ENCODE measurements at regions of chr5 and their contacts with region 1.

Region 1: DNA sequence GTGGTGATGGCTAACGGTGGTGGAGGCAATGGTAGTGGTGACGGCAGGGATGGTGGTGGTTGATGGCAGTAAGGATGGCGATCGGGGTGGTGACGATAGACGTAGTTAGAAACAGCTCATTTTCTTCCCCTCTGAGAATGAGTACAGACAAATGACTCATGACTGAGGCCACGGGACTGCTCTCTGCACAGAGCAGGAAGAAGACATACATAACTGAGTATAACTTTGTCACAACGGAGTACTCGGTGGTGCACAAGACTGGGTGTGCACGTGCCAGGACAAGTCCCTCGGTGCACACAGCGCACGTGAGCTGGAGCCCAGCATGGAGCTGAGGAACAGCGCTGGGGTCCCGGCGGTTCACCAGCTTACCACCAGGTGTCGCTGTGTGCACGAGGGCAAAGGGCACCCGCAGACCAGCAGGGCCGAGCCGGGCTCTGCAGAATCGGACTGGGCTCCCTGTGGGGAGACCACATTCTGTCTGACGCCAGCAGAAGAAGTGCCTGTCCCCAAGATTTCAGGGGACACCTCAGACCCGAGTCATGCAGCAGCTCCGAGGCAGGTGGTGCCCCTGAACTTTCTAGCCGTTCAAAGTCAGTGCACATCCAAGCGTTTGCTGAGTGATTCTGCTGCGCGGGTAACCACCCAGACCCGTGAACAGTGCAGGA is 188.6 kb downstream of the FSTL4 start:
- DNase-seq: peak; percentile 81
- CTCF ChIP-seq: peak; percentile 88

Region 2: DNA sequence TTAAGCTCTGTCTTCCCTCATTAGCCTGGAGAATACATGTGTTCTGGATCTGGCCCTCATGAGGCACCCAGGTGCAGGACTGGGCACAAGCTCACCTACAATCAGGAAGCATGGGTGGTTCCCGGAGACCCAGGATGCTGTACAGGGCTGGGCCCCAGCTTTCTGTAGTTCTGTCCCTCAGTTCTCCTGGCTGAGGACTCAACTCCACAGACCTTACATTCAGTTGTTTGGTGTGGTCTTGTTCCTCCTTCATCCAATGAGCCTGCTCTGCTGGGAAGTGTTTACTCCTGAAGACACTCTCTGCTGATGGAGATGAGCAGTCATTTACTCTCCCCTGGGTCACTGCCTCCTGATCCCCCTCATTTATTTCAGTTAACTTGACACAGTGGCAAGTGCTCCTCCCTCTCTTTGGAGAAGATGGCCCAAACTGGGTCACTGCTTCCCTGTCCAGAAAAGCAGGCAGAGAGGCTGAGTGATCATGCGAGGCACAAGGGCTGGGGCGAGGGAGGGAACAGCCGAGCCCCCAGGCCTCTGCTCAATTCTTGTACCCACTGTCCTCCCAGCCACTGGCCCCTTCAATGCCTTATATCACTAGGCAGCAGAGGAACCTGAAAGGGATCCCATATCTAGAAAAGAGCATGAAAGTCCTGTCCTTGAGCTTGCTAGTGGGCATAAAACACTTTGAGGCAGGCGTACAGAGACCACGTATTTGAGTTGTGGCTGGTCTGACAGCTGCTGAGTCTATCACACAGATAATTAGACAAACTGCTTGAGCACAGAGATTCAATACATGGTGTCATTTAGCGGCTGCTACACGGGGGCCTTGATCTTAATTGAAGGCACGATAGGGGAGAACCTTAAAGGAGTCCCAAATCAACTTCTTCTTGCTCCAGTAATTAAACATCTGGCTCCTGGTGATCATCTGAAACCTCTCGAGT is 33.1 kb before region 1 on chr5:
- CTCF ChIA-PET with region 1: interaction called, 28 read pairs
- POLR2A ChIA-PET with region 1: no interaction called
- DNase-seq: no peak
- CTCF ChIP-seq: no peak

Region 3: GRCh38 chr5:133406977-133407678 is 16.6 kb before region 1 on chr5:
- CTCF ChIA-PET with region 1: interaction called, 51 read pairs
- POLR2A ChIA-PET with region 1: no interaction called
- DNase-seq: no peak
- CTCF ChIP-seq: no peak

Region 4: DNA sequence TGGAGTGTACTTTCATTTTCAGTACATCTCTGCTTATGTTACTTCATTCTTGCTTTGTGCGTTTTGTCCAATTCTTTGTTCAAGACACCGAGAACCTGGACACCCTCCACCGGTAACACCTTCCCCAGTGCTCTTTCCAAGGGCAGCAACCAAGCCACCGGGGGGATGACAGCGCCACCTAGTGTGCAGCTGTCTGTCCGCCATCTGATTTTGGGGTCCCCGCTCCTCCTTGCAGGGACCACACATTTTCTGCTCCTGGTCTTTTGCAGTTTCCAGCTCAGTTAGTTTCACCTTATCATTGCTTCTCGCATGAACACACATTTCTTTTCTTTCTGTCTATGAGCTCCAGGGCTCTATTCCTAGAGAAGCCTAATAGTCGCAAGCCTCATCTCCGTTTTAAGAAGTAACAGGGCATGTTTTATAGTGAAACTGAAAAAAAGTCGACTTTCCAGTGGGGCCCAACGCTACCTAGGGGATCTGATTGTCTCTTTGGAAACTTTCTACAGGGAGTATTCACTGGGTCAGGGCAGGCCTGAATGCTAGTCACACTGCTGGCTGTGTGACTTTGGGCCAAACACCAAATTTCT is 36.5 kb after region 1 on chr5:
- CTCF ChIA-PET with region 1: interaction called, 11 read pairs
- POLR2A ChIA-PET with region 1: no interaction called
- DNase-seq: peak; percentile 61
- CTCF ChIP-seq: peak; percentile 60

Region 5: DNA sequence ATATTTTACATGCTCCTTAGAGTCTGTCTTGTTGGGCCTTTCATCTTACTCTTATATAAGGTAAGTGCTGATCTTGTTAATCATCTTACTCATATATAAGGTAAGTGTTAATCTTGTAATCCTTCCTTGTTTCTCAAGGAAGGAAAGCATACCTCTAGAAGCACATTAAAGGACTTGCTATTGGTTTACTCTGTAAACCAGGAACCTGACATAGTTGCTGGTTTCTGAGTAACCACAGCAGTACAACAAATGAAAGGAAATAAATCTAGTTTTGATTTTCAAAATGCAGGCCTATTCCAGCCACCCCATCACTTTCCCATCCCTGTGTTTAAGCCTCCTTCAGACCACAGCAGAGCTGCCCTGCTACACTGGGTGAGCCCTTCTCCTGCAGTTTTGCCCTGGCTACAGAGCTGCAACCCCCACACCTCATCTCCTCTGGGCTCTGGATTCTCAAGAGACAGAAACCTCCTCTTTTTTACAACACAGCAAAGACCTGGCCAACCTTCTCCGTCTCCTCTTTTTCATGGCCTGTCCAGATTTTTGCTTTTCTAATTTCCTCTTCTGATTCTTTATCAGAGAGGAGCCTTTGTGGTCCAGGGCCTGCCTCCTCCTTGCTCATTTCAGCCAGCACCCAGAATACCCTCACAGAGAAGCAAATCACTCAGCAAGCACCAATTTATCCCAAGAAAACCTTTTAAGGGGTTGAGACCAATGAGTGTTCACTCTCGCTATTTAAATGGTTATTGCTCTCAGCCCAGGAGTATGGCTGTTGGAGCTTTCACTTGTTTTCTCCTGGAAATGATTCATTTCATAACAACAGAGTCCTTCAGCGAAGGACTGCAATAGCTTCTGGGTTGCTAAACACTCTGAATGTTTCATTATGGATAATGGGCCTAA is 85.3 kb after region 1 on chr5:
- CTCF ChIA-PET with region 1: interaction called, 13 read pairs
- POLR2A ChIA-PET with region 1: no interaction called
- DNase-seq: no peak
- CTCF ChIP-seq: no peak

Region 6: GRCh38 chr5:133944263-133945185 is 520.8 kb after region 1 on chr5:
- CTCF ChIA-PET with region 1: interaction called, 13 read pairs
- POLR2A ChIA-PET with region 1: no interaction called
- DNase-seq: peak; percentile 67
- CTCF ChIP-seq: peak; percentile 68

Measured in GM10248 (cell line).